Activated CD4-positive, alpha-beta memory T cell treated with anti-CD3 and anti-CD28 coated beads, Interleukin-2, amount 10 ng/mL, durations not matched to agents 7 days and 5 days (primary cell): ENCODE measurements at regions of chr17 and their contacts with region 1.

Region 1: GRCh38 chr17:74961657-74962490 is 10.7 kb downstream of the HID1 start:
- DNase-seq: peak; percentile 86
- H3K4me3 Mint-ChIP-seq: no peak overlapping the region
- H3K27ac Mint-ChIP-seq: no peak overlapping the region
- H3K4me1 Mint-ChIP-seq: peaks cover 7% of the 10 kb centered on the region
- H3K27me3 Mint-ChIP-seq: peaks cover 5% of the 10 kb centered on the region

Region 2: GRCh38 chr17:74790161-74791054 is 171.5 kb before region 1 on chr17:
- CTCF ChIA-PET with region 1: interaction called, 13 read pairs
- POLR2A ChIA-PET with region 1: no interaction called
- DNase-seq: no peak
- H3K4me3 Mint-ChIP-seq: no peak overlapping the region
- H3K27ac Mint-ChIP-seq: peak overlapping the region; percentile 41
- H3K4me1 Mint-ChIP-seq: peaks cover 40% of the 10 kb centered on the region
- H3K27me3 Mint-ChIP-seq: no peaks in the 10 kb centered on the region

Region 3: DNA sequence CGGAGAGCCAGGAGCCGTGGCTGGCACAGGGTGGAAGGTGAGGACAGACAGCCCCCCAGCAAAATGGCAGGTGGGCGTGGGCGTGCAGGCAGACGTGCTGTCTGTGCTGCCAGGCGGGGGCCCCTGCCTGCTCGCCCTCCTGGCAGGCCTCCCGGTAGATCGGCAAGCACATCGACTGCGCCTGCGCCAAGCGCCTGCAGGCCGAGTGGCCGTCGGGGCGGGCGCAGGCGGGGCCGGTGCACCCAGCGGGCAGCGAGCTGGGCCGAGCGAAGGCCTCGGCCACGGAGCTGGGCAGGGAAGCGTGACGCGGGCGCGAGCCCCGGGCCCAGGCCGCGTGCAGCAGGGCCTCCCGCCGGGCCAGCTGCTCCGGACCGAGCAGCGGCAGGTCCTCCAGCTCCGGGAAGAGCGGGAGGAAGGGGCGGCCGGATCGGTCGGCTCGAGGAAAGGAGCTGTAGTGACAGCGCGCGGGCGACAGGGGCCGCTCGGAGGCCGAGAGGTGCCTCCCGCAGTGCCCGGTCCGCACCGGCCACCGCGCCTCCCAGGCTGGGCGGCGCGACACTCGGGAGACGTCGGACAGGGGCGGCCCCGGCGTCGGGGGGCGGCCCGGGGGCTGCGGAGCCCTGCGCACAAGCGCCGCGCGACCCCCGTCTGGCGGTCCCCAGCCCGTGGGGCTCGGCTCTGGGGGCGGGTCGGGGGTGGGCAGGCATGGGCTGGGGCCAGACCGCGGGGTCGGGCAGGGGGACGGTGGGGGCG is 119.1 kb before region 1 on chr17:
- CTCF ChIA-PET with region 1: no interaction called
- POLR2A ChIA-PET with region 1: no interaction called
- DNase-seq: no peak
- H3K4me3 Mint-ChIP-seq: no peak overlapping the region
- H3K27ac Mint-ChIP-seq: no peak overlapping the region
- H3K4me1 Mint-ChIP-seq: peaks cover 10% of the 10 kb centered on the region
- H3K27me3 Mint-ChIP-seq: peaks cover 16% of the 10 kb centered on the region

Region 4: DNA sequence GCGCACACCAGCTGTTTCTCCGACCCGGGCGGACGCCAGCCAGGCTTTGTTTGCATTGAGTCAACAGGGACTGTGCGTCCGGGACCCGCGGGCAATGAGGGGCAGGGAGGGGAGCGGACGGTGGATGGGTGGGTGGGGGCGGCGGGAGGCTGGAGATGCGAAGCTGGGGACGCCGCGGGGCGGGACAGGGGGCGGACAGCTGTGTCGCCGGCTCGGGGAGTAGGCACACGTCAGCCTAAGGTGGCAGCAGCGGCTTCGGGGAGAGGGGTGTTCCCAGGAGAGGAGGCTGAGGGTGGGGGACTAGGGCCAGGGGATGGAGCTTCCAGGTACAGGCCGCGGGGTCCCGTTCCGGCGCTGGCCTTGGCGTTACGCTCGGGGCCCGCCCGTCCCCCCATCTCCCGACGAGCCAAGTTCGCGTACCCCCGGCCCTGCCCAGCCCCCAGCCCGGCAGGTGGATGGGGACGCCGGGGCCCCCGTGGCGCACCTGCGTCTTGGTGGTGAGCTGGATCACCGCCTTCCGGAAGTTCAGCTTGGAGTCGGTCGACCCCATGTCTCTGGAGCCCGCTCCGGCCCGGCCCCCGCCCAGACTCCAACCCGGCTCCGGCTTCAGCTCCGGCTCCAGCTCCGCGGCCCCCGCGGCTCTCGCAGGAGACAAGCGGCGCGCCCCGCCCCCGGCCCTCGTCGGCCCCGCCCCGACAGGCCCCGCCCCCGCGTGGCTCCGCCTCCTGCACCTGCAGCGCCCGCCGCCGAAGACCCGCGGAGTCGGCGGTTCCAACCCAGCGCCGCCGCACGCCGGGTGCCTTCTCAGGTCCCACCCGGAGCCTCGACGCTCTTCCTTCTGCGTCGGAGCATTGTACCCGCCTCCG is 10.5 kb after region 1 on chr17 and contains the start of gene HID1:
- CTCF ChIA-PET with region 1: interaction called, 15 read pairs
- POLR2A ChIA-PET with region 1: interaction called, 5 read pairs
- DNase-seq: peak; percentile 76
- H3K4me3 Mint-ChIP-seq: peak within 1 kb of the TSS; percentile 72
- H3K27ac Mint-ChIP-seq: no peak within 1 kb of the TSS
- H3K4me1 Mint-ChIP-seq: peaks cover 6% of the 10 kb centered on the region
- H3K27me3 Mint-ChIP-seq: peaks cover 33% of the 10 kb centered on the region
- total RNA-seq, gene HID1: 0.38 to 1.4 TPM

Region 5: GRCh38 chr17:75006653-75007052 is 44.8 kb after region 1 on chr17:
- CTCF ChIA-PET with region 1: interaction called, 65 read pairs
- POLR2A ChIA-PET with region 1: interaction called, 23 read pairs
- DNase-seq: no peak
- H3K4me3 Mint-ChIP-seq: no peak overlapping the region
- H3K27ac Mint-ChIP-seq: no peak overlapping the region
- H3K4me1 Mint-ChIP-seq: peaks cover 2% of the 10 kb centered on the region
- H3K27me3 Mint-ChIP-seq: peaks cover 7% of the 10 kb centered on the region

Region 6: GRCh38 chr17:75034236-75034908 is 72.5 kb after region 1 on chr17:
- CTCF ChIA-PET with region 1: interaction called, 29 read pairs
- POLR2A ChIA-PET with region 1: no interaction called
- DNase-seq: peak; percentile 88
- H3K4me3 Mint-ChIP-seq: peak overlapping the region; percentile 87
- H3K27ac Mint-ChIP-seq: peak overlapping the region; percentile 99
- H3K4me1 Mint-ChIP-seq: peaks cover 51% of the 10 kb centered on the region
- H3K27me3 Mint-ChIP-seq: peaks cover 8% of the 10 kb centered on the region

Region 7: GRCh38 chr17:75199886-75200618 is 238.2 kb after region 1 on chr17:
- CTCF ChIA-PET with region 1: interaction called, 87 read pairs
- POLR2A ChIA-PET with region 1: interaction called, 8 read pairs
- DNase-seq: no peak
- H3K4me3 Mint-ChIP-seq: no peak overlapping the region
- H3K27ac Mint-ChIP-seq: no peak overlapping the region
- H3K4me1 Mint-ChIP-seq: peaks cover 13% of the 10 kb centered on the region
- H3K27me3 Mint-ChIP-seq: peaks cover 1% of the 10 kb centered on the region